ENCODE measurements at regions of chr11 and their contacts with region 1.

Region 1: DNA sequence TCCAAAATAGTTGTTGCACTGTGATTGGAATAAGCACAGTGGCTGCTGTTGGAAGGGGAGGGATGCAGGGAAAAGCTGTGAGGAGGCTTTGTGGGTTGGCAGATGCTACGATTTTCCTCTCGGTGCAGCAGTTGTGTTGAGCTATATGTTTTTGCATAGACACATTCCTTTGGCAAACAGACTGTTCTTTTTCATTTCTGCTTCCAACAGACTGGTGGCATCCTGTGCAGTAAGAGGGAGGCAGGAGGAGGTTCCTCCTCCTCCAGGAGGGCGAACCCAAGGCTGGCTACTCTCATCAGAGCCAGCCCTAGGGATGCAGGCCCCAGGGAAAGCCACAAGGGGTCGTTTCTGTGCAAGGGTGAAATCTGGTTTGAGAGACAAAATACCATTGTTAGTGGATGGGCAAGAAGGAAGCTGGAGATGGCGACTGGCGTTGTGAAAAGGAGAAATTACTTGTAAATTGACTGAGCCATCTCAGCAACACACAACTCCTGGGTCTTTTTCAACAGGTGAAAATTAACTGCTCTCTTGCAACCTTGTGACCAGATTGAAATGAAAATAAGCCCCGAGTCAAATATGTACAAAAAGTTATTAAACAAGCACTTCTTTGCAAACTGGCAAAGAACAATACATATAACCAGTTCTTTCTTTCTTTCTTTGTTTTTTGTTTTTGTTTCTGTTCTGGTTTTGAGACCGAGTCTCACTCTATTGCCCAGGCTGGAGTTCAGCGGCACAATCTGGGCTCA is 26.5 kb upstream of the UBASH3B start:
- DNase-seq: peak; percentile 71
- H3K4me3 ChIP-seq: no peak overlapping the region
- H3K27ac ChIP-seq: no peak overlapping the region
- H3K4me1 ChIP-seq: peaks cover 6% of the 10 kb centered on the region
- H3K27me3 ChIP-seq: peaks cover 0 to 2% of the 10 kb centered on the region in 2 experiments
- CTCF ChIP-seq: peak; percentile 92 to 94
- POLR2A ChIP-seq: no peak

Region 2: GRCh38 chr11:122642472-122642922 is 13.5 kb after region 1 on chr11:
- CTCF ChIA-PET with region 1: interaction called, 10 read pairs
- POLR2A ChIA-PET with region 1: no interaction called
- dilution Hi-C with region 1: no loop called
- intact Hi-C with region 1: no loop called
- DNase-seq: peak; percentile 60
- H3K4me3 ChIP-seq: no peak overlapping the region
- H3K27ac ChIP-seq: peak overlapping the region; percentile 69
- H3K4me1 ChIP-seq: peaks cover 26% of the 10 kb centered on the region
- H3K27me3 ChIP-seq: no peaks in the 10 kb centered on the region
- CTCF ChIP-seq: no peak
- POLR2A ChIP-seq: peak; percentile 25

Region 3: DNA sequence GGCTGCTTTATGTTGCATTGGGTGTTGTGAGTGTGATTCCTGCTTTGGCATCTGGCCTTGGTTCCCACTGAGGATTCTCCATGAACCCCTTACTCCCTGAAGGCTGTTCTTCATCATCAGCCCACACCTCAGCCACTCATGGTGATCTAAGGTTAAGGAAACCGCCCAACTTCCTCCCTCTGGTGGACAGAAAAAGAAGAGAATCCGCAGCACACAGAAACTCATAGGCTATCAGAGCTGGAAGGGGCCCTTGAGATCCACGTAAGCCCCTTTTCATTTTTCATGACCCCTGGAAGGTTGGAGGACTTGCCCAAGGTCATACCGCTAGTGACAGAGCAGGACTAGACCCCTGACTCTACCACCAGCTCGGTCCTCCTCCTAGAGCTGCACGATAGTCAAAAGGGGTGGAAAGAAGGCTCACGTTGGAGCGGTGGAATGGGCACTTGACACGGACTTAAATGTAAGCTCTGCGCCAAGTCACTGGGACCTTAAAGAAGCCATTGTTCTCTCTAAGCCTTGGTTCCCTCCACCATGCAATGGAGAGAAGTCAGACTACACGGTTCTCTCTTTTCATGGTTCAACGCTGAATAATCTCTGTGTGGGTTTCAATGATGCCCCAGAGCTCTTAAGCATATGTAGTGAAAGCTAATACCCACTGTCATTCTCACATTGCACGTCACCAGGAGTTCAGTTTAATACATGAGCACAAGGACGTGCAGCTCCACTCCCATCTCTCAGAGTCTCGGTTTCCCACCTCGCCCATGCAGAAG is 125.8 kb after region 1 on chr11:
- CTCF ChIA-PET with region 1: interaction called, 18 read pairs
- POLR2A ChIA-PET with region 1: no interaction called
- dilution Hi-C with region 1: no loop called
- intact Hi-C with region 1: loop called (anchors 1 kb)
- DNase-seq: no peak
- H3K4me3 ChIP-seq: no peak overlapping the region
- H3K27ac ChIP-seq: no peak overlapping the region
- H3K4me1 ChIP-seq: peaks cover 33% of the 10 kb centered on the region
- H3K27me3 ChIP-seq: no peaks in the 10 kb centered on the region
- CTCF ChIP-seq: peak; percentile 36 to 37
- POLR2A ChIP-seq: no peak

Region 4: DNA sequence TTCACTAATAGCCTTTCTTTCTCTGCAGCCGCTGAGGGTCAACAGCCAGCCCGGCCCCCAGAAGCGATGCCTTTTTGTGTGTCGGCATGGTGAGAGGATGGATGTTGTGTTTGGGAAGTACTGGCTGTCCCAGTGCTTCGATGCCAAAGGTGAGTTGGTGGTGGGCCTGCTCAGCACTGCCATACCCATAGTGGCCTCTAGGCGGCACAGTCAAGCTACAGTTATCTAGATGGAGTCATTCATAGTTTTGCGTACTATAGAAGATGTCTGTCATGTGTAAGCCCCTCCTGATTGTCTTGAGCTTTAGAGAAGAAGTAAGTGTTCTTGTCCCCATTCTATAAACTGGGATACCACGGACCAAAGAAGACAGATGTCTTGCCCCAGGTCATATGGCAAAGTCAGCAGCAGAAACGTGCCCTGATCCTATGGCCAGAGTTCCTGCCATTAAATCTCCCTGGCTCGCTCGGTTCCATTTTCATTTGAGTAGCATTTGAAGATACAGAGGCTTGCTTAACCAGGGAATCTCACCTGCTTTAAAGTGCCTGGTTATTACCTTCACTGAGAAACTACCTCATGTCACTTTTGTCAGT is 167.2 kb after region 1 on chr11:
- CTCF ChIA-PET with region 1: interaction called, 493 read pairs
- POLR2A ChIA-PET with region 1: no interaction called
- dilution Hi-C with region 1: no loop called
- intact Hi-C with region 1: no loop called
- DNase-seq: peak; percentile 42
- H3K4me3 ChIP-seq: no peak overlapping the region
- H3K27ac ChIP-seq: no peak overlapping the region
- H3K4me1 ChIP-seq: peaks cover 7% of the 10 kb centered on the region
- H3K27me3 ChIP-seq: no peaks in the 10 kb centered on the region
- CTCF ChIP-seq: peak; percentile 78 to 81
- POLR2A ChIP-seq: no peak

Region 5: DNA sequence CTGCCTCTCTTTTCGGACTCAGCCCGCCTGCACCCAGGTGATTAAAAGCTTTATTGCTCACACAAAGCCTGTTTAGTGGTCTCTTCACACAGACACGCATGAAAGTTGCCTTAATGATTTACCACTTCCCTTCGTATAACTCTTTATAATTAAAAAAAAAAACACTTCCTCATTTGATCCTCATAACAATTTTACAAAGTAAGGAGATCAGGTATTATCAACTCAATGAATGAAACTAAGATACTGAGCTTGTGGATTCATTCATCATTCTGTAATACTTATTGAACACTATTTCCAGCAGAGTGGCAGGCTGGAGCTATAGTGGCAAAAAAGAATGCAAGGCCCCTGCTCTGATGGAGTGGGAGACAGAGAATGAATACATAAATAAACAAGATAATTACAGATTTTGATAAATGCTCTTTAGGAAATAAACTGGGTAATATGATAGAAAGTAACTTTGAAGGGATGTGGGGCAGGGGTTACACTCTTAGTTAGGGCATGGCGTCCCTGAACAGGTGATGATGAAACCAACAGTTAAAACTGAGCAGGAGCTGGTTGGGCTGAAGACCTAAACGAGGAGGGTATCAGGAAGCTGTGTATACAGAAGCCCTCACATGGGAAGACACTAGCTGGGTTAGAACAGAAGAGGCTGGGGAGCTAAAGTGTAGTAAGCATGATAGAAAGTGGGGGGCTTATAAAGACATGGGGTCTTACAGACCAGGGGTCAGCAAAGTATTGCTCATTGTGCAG is 203.9 kb after region 1 on chr11:
- CTCF ChIA-PET with region 1: interaction called, 25 read pairs
- POLR2A ChIA-PET with region 1: no interaction called
- dilution Hi-C with region 1: no loop called
- intact Hi-C with region 1: no loop called
- DNase-seq: no peak
- H3K4me3 ChIP-seq: no peak overlapping the region
- H3K27ac ChIP-seq: no peak overlapping the region
- H3K4me1 ChIP-seq: no peaks in the 10 kb centered on the region
- H3K27me3 ChIP-seq: peaks cover 0 to 2% of the 10 kb centered on the region in 2 experiments
- CTCF ChIP-seq: no peak
- POLR2A ChIP-seq: no peak

Region 6: DNA sequence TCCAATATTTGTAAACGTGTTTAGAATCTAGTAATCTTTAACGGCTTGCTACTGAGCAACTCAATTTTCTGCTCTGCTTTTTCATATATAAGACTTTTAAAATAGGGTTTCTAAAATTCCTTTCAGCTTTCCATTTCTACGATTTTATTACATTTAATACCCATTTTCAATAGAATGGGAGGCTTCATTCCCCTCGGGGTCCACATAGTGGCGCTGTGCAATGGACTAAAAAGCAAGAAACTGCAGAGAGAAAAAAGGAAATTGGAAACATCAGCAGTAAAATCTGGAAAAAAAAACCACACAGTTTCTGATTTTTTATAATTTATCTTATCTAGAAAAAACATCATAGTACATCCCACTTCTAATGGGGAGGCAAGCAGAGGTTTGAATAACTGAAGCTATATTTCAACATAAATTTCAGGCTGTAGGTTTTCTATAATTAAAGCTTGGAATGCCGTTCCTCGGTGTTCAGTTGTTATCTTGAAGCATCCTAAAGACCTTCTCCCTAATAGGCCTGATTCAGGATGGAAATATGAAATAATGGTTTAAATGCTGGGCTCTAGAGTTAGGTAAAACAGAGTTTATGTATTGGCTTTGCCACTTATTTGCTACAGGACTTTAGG is 234.8 kb after region 1 on chr11:
- CTCF ChIA-PET with region 1: interaction called, 720 read pairs
- POLR2A ChIA-PET with region 1: no interaction called
- dilution Hi-C with region 1: no loop called
- intact Hi-C with region 1: no loop called
- DNase-seq: peak; percentile 56
- H3K4me3 ChIP-seq: no peak overlapping the region
- H3K27ac ChIP-seq: no peak overlapping the region
- H3K4me1 ChIP-seq: no peaks in the 10 kb centered on the region
- H3K27me3 ChIP-seq: peaks cover 11 to 18% of the 10 kb centered on the region in 2 experiments
- CTCF ChIP-seq: peak; percentile 66 to 76
- POLR2A ChIP-seq: no peak

Region 7: DNA sequence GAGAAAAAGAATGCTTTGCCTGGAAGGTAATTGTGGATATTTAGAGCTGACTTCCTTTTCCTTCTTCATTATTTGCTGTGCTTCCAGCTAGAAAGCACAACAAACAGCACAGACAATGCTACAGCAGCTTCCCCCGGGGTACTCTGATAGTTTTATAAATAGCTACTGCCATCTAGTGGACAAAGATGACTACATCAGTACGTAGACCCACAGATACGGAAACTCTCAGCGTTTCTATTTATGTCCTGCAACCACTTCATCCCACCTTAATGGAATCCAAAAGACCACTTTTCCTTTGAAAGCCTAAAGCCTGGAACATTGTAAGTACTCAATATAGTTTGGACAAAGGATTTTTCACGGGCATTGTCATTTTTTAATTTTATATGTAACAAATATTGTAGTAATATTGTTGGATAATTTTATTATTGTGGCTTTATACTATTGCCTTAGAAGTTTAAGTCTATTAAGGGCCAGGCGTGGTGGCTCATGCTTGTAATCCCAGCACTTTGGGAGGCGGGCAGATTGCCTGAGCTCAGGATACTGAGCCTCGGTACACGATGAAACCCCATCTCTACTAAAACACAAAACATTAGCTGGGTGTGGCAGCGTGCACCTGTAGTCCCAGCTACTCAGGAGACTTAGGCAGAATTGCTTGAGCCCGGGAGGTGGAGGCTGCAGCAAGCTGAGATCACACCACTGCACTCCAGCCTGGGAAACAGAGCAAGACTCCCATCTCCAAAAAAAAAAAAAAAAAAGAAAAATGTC is 425.5 kb after region 1 on chr11:
- CTCF ChIA-PET with region 1: interaction called, 21 read pairs
- POLR2A ChIA-PET with region 1: no interaction called
- dilution Hi-C with region 1: no loop called
- intact Hi-C with region 1: no loop called
- DNase-seq: peak; percentile 68
- H3K4me3 ChIP-seq: no peak overlapping the region
- H3K27ac ChIP-seq: no peak overlapping the region
- H3K4me1 ChIP-seq: peaks cover 13% of the 10 kb centered on the region
- H3K27me3 ChIP-seq: no peaks in the 10 kb centered on the region
- CTCF ChIP-seq: peak; percentile 62 to 65
- POLR2A ChIP-seq: peak; percentile 50